ENCODE measurements at regions of chr5 and their contacts with region 1.

Region 1: GRCh38 chr5:89473196-89473595 is 590.2 kb upstream of the MEF2C start:
- DNase-seq: no peak
- H3K4me3 Mint-ChIP-seq: no peak overlapping the region
- H3K27ac Mint-ChIP-seq: no peak overlapping the region
- H3K4me1 Mint-ChIP-seq: no peaks in the 10 kb centered on the region
- H3K27me3 Mint-ChIP-seq: no peaks in the 10 kb centered on the region

Region 2: GRCh38 chr5:89584339-89584956 is 111.3 kb after region 1 on chr5:
- CTCF ChIA-PET with region 1: interaction called, 10 read pairs
- intact Hi-C with region 1: no loop called
- DNase-seq: no peak
- H3K4me3 Mint-ChIP-seq: no peak overlapping the region
- H3K27ac Mint-ChIP-seq: no peak overlapping the region
- H3K4me1 Mint-ChIP-seq: no peaks in the 10 kb centered on the region
- H3K27me3 Mint-ChIP-seq: no peaks in the 10 kb centered on the region

Region 3: DNA sequence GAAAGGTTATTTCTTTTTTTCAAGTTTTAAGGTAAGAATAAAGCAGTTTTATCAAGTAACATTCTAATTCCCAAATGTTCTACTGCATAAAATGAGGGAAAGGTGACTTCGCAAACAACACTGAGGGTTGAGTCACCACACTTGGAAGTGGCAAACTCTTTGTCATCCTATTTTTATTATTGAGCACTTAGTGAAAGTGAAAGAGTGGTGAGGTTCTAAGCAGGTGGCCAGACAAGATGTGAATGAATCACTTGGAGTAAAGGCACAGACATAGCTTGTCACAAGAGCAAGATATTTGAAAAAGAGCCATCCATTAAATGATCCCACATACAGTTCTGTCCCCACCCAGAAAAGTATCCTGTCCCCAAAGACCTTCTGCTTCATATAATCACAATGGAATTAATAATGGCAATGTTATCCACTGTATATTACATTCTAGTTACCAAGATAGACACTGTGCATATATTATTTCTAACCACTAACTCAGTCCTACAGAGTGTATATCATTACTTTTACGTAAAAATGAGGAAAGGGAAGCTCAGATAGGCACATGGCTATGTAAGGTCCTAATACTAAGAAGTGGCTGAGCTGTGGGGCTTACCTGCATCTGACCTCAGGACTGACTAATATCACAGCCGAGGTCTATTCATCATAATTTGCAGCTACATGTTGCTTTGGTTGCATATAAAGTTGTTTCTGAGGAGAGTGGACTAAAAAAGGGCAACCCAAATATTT is 140.2 kb after region 1 on chr5:
- CTCF ChIA-PET with region 1: no interaction called
- intact Hi-C with region 1: no loop called
- DNase-seq: no peak
- H3K4me3 Mint-ChIP-seq: no peak overlapping the region
- H3K27ac Mint-ChIP-seq: no peak overlapping the region
- H3K4me1 Mint-ChIP-seq: no peaks in the 10 kb centered on the region
- H3K27me3 Mint-ChIP-seq: no peaks in the 10 kb centered on the region

Measured in activated naive CD4-positive, alpha-beta T cell treated with anti-CD3 and anti-CD28 coated beads for 36 hours (primary cell).